AG04450 (cell line): ENCODE measurements at regions of chrX and their contacts with region 1.

Region 1: GRCh38 chrX:16931371-16931770 is 15.1 kb upstream of the REPS2 start:
- DNase-seq: no peak
- H3K4me3 ChIP-seq: no peak overlapping the region
- H3K27ac ChIP-seq: no peak overlapping the region
- H3K27me3 ChIP-seq: peaks cover 2% of the 10 kb centered on the region
- CTCF ChIP-seq: no peak

Region 2: GRCh38 chrX:16920075-16920474 is 11.3 kb before region 1 on chrX:
- CTCF ChIA-PET with region 1: no interaction called
- POLR2A ChIA-PET with region 1: no interaction called
- DNase-seq: no peak
- H3K4me3 ChIP-seq: no peak overlapping the region
- H3K27ac ChIP-seq: no peak overlapping the region
- H3K27me3 ChIP-seq: no peaks in the 10 kb centered on the region
- CTCF ChIP-seq: no peak

Region 3: GRCh38 chrX:16946361-16946964 is 15.1 kb after region 1 on chrX and contains the start of gene REPS2:
- CTCF ChIA-PET with region 1: interaction called, 13 read pairs
- POLR2A ChIA-PET with region 1: no interaction called
- DNase-seq: no peak
- H3K4me3 ChIP-seq: peak within 1 kb of the TSS; percentile 55
- H3K27ac ChIP-seq: no peak within 1 kb of the TSS
- H3K27me3 ChIP-seq: peaks cover 7% of the 10 kb centered on the region
- CTCF ChIP-seq: no peak
- polyA plus RNA-seq, gene REPS2: 0.15 and 0.17 TPM in 2 replicates

Region 4: GRCh38 chrX:17706676-17707075 is 775.3 kb after region 1 on chrX:
- CTCF ChIA-PET with region 1: no interaction called
- POLR2A ChIA-PET with region 1: no interaction called
- DNase-seq: peak; percentile 60
- H3K4me3 ChIP-seq: no peak overlapping the region
- H3K27ac ChIP-seq: no peak overlapping the region
- H3K27me3 ChIP-seq: no peaks in the 10 kb centered on the region
- CTCF ChIP-seq: no peak